ENCODE measurements at regions of chr3 and their contacts with region 1.

Region 1: GRCh38 chr3:179147873-179148615 is at the start of gene PIK3CA:
- DNase-seq: peak; percentile 95
- ATAC-seq: peak; percentile 98
- total RNA-seq, gene PIK3CA: 21.1 TPM

Region 2: DNA sequence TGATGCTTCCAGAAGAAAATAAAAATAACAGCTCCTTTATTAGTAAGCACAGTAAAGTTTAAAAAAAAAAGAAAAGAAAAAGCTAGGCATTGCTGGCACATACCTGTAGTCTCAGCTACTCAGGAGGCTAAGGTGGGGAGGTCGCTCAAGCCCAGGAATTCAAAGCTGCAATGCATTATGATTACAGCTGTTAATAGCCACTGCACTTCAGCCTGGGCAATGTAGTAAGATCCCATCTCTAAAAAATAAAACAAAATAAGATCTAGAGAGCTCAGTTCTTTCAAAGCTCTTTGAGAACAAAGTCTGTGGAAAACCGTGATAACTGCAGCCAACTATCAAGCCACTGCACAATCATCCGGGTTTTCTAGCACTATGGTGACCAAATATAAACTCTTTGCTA is 288.7 kb before region 1 on chr3:
- intact Hi-C with region 1: no loop called
- DNase-seq: no peak
- ATAC-seq: no peak

Region 3: GRCh38 chr3:179071550-179072397 is 76.3 kb before region 1 on chr3 and contains the start of gene ZMAT3:
- intact Hi-C with region 1: loop called (anchors 5 kb)
- DNase-seq: peak; percentile 94
- ATAC-seq: peak; percentile 99
- total RNA-seq, gene ZMAT3: 11.1 TPM

Region 4: DNA sequence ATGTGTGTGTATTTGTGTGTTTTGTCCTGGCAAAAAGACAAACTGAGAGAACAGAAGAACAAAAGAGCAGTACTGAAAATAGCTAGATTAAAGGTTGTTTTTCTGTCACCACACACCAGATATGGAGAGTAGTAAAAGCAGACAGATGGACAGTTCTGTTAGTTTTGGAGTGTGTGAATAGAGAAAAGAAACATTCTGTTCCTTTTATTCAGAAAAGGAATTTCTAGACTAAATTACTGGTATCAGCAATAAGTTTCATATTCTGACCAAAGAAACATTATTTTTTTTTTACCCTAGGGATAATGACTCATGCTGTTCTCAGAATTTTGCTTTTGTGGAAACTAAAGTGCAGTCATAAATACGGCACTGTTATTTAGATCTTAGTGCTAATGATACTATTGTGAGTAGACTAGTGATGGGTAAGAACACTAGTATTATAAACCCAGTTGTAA is 33.0 kb after region 1 on chr3:
- intact Hi-C with region 1: loop called (anchors 5 kb)
- DNase-seq: no peak
- ATAC-seq: peak; percentile 86

Region 5: DNA sequence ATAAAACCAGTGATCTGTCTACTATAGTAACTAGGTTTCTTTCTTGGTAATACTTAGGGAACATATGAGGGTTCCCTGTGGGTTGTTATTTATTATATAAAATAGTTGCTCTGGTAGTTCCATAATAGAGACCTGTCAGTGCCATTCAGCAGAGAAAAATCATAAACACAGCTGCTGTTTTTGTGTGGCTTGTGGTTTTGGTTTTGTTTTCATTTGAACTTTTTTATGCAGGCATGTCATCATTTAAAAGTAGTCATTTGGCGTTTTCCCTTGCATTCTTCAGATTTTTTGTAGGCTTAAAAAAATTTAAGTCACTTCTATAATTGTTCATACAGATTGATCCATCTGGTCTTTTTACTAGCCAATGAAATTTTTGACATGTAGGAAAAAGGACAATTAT is 48.1 kb after region 1 on chr3:
- intact Hi-C with region 1: loop called (anchors 5 kb)
- DNase-seq: no peak
- ATAC-seq: no peak

Region 6: DNA sequence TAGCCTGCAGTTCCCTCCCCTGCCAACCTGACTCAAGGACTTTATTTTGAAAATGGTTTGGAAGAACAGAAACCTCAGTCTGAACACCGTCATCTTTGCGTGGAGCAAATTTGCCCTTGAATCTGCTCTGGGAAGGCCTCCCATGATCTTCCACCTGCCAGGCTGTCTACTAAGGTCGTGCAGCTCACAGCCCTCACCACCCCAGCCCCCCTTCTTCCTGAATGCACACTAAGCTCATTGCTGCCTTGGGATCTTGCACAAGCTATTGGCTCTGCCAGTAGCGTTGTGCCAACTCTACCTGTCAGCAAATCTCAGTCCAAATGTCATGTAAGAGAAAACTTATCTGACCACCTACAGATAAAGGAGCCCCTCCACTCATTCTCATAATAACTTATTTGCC is 646.3 kb after region 1 on chr3:
- intact Hi-C with region 1: no loop called
- DNase-seq: peak; percentile 37
- ATAC-seq: peak; percentile 75